ENCODE measurements at regions of chr5 and their contacts with region 1.

Region 1: DNA sequence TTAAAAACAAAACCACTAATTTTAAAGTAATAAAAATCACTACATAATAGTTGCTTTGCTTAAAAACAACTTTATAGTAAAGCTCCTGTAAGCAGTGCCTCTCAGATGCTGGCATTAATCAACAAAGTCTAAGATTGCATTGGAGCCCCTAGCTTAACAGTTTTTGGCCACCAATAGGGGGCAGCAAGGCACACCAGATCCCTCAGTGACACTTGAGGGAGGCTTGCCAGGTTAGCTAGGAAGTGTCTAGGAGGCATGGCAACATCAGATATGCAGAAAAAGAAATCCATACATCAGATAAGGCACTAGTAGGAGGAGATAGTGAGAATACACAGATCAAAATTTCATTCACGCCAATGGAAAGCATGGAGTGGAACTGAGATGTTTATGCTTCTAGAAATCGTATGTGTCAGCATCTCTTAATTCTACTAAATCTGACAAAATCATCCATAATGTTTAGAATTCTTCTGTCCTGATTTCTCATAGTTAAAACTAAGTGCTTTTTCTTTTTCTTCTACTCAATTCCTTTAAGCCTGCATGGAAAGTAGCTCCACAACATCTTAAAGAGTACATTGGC is 73.6 kb upstream of the PAM start:
- H3K4me3 Mint-ChIP-seq: no peak overlapping the region
- H3K27ac Mint-ChIP-seq: no peak overlapping the region
- H3K4me1 Mint-ChIP-seq: no peaks in the 10 kb centered on the region
- H3K27me3 Mint-ChIP-seq: no peaks in the 10 kb centered on the region

Region 2: DNA sequence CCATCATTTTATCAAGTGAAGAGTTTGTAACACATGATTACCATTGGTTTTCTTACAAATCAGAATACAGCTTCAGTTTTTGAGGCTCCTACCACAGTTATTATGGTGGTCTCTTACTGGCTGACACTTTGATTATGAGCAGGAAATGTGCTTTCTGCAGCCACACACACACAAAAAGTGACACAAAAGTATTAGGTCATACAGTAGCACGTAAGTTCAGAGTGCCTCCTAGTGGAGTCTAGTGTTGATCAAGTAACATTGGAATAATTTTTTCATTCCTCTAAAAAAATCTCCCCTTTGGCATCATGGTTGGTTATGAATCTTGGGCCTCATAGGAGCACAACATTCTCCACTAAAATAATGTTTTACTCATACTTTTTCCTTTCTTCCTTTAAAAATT is 111.2 kb after region 1 on chr5:
- intact Hi-C with region 1: loop called (anchors 5 kb)
- H3K4me3 Mint-ChIP-seq: no peak overlapping the region
- H3K27ac Mint-ChIP-seq: no peak overlapping the region
- H3K4me1 Mint-ChIP-seq: no peaks in the 10 kb centered on the region
- H3K27me3 Mint-ChIP-seq: no peaks in the 10 kb centered on the region

Region 3: GRCh38 chr5:103041071-103041676 is 359.7 kb after region 1 on chr5:
- intact Hi-C with region 1: loop called (anchors 2 kb)
- H3K4me3 Mint-ChIP-seq: no peak overlapping the region
- H3K27ac Mint-ChIP-seq: no peak overlapping the region
- H3K4me1 Mint-ChIP-seq: no peaks in the 10 kb centered on the region
- H3K27me3 Mint-ChIP-seq: no peaks in the 10 kb centered on the region

Region 4: DNA sequence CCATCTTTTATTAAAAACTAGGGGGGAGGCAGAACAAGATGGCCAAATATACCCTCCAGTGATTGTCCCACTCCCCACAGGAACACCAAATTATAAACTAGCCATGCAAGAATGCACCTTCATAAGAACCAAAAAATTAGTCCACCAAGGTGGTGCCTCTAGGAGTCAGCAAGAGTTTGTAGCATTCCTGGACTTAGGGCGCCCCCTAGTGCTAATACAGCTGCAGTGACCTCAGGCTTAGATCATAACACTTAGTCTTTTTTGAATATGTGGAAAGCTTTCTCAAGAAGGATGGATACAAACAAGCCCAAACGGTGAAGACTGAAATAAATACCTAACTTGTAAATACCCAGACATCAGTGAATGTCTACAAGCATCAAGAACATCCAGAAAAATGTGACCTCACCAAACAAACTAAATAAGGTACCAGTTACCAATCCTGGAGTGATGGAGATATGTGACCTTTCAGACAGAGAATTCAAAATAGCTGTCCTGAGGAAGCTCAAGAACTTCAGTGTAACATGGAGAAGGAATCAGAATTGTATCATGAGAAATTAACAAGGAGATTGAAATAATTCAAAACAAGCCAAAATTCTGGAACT is 457.9 kb after region 1 on chr5:
- intact Hi-C with region 1: loop called (anchors 2 kb)
- H3K4me3 Mint-ChIP-seq: no peak overlapping the region
- H3K27ac Mint-ChIP-seq: no peak overlapping the region
- H3K4me1 Mint-ChIP-seq: peaks cover 3% of the 10 kb centered on the region
- H3K27me3 Mint-ChIP-seq: no peaks in the 10 kb centered on the region

Measured in dendritic cell treated with granulocyte-macrophage colony-stimulating factor and Interleukin-4, amounts not matched to agents 40 ng/mL and 50 ng/mL, for 4 days (primary cell).